Heart left ventricle (tissue), 16 donors: ENCODE measurements at regions of chr18 and their contacts with region 1.

Region 1: GRCh38 chr18:13216092-13216582 is 2.4 kb upstream of the LDLRAD4 start:
- DNase-seq: peak; percentile 70 to 85 (median 79)
- ATAC-seq: peak; percentile 38 to 76 (median 68)
- H3K4me3 ChIP-seq: peak overlapping the region in 2 of 12 donors; percentile 83 to 89
- H3K27ac ChIP-seq: peak overlapping the region in 7 of 12 donors; percentile 22 to 95 (median 91)
- H3K4me1 ChIP-seq: peaks cover 4 to 43% (median 30%) of the 10 kb centered on the region in 12 donors
- H3K27me3 ChIP-seq: no peaks in the 10 kb centered on the region
- CTCF ChIP-seq: peak; percentile 46 to 84 (median 72)
- POLR2A ChIP-seq: no peak

Region 2: GRCh38 chr18:13375302-13376255 is 159.4 kb after region 1 on chr18:
- intact Hi-C with region 1: loop called in 8 of 10 experiments (anchors 2 to 5 kb)
- DNase-seq: peak; percentile 63 to 82 (median 75)
- ATAC-seq: peak in 3 of 4 donors; percentile 74 to 83 (median 83)
- H3K4me3 ChIP-seq: no peak overlapping the region
- H3K27ac ChIP-seq: peak overlapping the region in 11 of 12 donors; percentile 11 to 80 (median 65)
- H3K4me1 ChIP-seq: peaks cover 0 to 66% (median 49%) of the 10 kb centered on the region in 12 donors
- H3K27me3 ChIP-seq: no peaks in the 10 kb centered on the region
- CTCF ChIP-seq: peak in 2 of 12 donors; percentile 4 to 23
- POLR2A ChIP-seq: no peak

Region 3: GRCh38 chr18:13435596-13436327 is 219.6 kb after region 1 on chr18:
- intact Hi-C with region 1: loop called in 3 of 10 experiments (anchors 5 to 10 kb)
- DNase-seq: no peak
- ATAC-seq: peak; percentile 35 to 76 (median 64)
- H3K4me3 ChIP-seq: no peak overlapping the region
- H3K27ac ChIP-seq: peak overlapping the region in 8 of 12 donors; percentile 23 to 61 (median 41)
- H3K4me1 ChIP-seq: peaks cover 0 to 45% (median 25%) of the 10 kb centered on the region in 12 donors
- H3K27me3 ChIP-seq: no peaks in the 10 kb centered on the region
- CTCF ChIP-seq: no peak
- POLR2A ChIP-seq: no peak

Region 4: GRCh38 chr18:13464432-13465123 is 248.4 kb after region 1 on chr18:
- intact Hi-C with region 1: loop called in 2 of 10 experiments (anchors 5 to 10 kb)
- DNase-seq: peak; percentile 66 to 84 (median 74)
- ATAC-seq: peak; percentile 78 to 93 (median 87)
- H3K4me3 ChIP-seq: peak overlapping the region in 5 of 12 donors; percentile 11 to 54 (median 15)
- H3K27ac ChIP-seq: peak overlapping the region in 10 of 12 donors; percentile 21 to 88 (median 48)
- H3K4me1 ChIP-seq: peaks cover 0 to 52% (median 30%) of the 10 kb centered on the region in 12 donors
- H3K27me3 ChIP-seq: no peaks in the 10 kb centered on the region
- CTCF ChIP-seq: no peak
- POLR2A ChIP-seq: no peak

Region 5: DNA sequence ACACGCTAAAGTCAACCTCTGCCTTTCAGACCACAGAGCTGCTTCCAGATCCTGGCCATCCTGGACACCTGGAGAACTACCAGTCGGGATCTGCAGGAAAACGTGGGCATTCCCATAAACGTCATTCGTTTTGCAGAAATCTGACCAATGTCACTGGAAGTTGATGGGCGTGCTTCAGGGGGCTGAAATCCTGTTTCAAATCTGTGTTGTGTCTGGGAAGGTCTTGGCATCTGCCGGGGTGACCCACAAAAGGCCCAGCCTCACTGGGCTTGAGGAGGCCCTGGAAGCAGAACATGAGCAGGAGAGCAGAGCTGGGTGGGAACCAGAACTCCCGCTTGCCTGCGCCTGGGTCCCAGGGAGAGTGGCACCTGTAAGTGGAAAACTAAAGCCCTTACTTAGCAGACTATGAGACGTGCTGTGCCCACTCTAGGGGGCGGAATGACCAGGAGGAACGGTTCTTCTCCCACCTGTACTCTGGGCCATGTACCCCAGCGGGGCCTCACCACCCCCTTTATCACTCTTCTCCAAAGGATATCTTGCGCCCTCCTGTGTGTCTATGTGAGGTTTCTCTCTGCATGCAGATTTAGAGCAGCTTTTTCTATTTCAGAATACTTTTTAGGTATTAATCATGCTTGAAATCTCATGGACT is 309.4 kb after region 1 on chr18:
- intact Hi-C with region 1: loop called in 8 of 10 experiments (anchors 2 to 5 kb)
- DNase-seq: no peak
- ATAC-seq: peak in 1 of 4 donors; percentile 19
- H3K4me3 ChIP-seq: no peak overlapping the region
- H3K27ac ChIP-seq: peak overlapping the region in 2 of 12 donors; percentile 18
- H3K4me1 ChIP-seq: peaks cover 0 to 28% (median 15%) of the 10 kb centered on the region in 12 donors
- H3K27me3 ChIP-seq: no peaks in the 10 kb centered on the region
- CTCF ChIP-seq: no peak
- POLR2A ChIP-seq: no peak

Region 6: GRCh38 chr18:13629841-13630715 is 413.9 kb after region 1 on chr18:
- intact Hi-C with region 1: loop called (anchors 1 to 5 kb)
- DNase-seq: peak in 4 of 5 donors; percentile 58 to 67 (median 62)
- ATAC-seq: peak; percentile 82 to 90 (median 86)
- H3K4me3 ChIP-seq: no peak overlapping the region
- H3K27ac ChIP-seq: peak overlapping the region in 8 of 12 donors; percentile 5 to 72 (median 34)
- H3K4me1 ChIP-seq: peaks cover 0 to 37% (median 11%) of the 10 kb centered on the region in 12 donors
- H3K27me3 ChIP-seq: no peaks in the 10 kb centered on the region
- CTCF ChIP-seq: peak; percentile 66 to 91 (median 86)
- POLR2A ChIP-seq: no peak

Region 7: DNA sequence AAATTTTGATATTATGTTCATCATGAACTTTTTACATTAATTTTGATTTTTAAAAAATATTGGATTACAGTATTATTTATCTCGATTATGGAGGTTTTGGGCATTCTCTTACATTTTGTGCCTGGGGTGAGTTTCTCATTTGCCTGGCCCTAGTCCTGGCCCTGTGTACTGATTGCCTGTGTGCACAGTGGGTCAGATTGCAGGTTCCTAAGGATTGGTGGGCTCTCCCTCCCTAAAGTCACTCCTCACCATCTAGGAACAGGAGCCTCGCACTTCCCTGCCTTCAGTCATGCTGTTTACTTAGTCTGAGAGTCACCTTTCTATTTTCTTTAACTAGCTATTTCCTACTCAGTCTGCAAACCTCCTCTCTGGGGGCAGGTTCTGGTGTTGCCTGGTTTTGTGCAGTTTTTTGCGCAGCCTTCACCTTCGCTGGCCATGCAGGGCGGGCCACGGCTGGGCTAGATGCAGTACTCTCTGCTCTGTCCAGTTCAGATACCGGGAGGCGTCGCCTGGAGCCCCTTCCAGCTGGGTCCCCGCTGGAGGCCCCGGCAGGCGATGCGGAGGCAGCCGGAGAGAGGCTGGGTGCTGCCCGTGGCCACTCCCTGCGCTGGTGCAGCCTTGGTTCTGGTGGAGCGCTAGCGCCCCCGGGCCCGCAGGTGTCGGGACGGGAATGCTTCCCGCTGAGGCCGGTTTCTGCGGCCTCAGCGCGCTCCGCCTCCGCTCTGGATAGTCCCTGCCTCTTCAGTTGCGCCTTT is 584.5 kb after region 1 on chr18:
- intact Hi-C with region 1: loop called in 2 of 10 experiments (anchors 5 to 10 kb)
- DNase-seq: peak; percentile 65 to 85 (median 76)
- ATAC-seq: peak; percentile 89 to 98 (median 94)
- H3K4me3 ChIP-seq: peak overlapping the region in 10 of 12 donors; percentile 6 to 49 (median 33)
- H3K27ac ChIP-seq: no peak overlapping the region
- H3K4me1 ChIP-seq: peaks cover 0 to 15% (median 4%) of the 10 kb centered on the region in 12 donors
- H3K27me3 ChIP-seq: peaks cover 0 to 30% (median 0%) of the 10 kb centered on the region in 9 donors
- CTCF ChIP-seq: peak; percentile 26 to 66 (median 50)
- POLR2A ChIP-seq: no peak